Ascending aorta (tissue), 2 donors: ENCODE measurements at regions of chr20 and their contacts with region 1.

Region 1: DNA sequence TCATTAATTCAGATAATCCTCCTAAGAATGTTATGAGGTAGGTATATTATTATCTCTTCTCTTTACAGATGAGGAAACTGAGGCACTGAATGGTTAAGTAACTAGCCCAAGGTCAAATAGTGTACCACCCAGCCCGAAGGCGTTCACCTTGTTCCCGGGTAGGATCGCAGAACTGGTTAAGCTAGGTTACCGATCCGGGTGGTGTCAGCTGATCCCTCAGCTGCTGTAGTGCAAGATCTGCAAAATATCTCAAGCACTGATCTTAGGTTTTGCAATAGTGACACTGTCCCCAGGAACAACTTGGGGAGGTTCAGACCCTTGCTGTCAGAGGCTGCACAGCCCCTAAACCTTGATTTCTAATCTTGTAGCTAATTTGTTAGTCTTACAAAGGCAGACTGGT is 28.2 kb downstream of the SLC52A3 start:
- DNase-seq: no peak
- H3K4me3 ChIP-seq: no peak overlapping the region
- H3K27ac ChIP-seq: no peak overlapping the region
- H3K4me1 ChIP-seq: no peaks in the 10 kb centered on the region
- H3K27me3 ChIP-seq: no peaks in the 10 kb centered on the region
- CTCF ChIP-seq: no peak

Region 2: GRCh38 chr20:561437-562231 is 178.5 kb before region 1 on chr20:
- intact Hi-C with region 1: loop called (anchors 1 kb)
- DNase-seq: peak in 1 of 2 donors; percentile 68
- H3K4me3 ChIP-seq: no peak overlapping the region
- H3K27ac ChIP-seq: no peak overlapping the region
- H3K4me1 ChIP-seq: no peaks in the 10 kb centered on the region
- H3K27me3 ChIP-seq: no peaks in the 10 kb centered on the region
- CTCF ChIP-seq: peak; percentile 81 to 93 (median 82)

Region 3: GRCh38 chr20:775679-776135 is 35.6 kb after region 1 on chr20:
- intact Hi-C with region 1: no loop called
- DNase-seq: no peak
- H3K4me3 ChIP-seq: no peak overlapping the region
- H3K27ac ChIP-seq: no peak overlapping the region
- H3K4me1 ChIP-seq: no peaks in the 10 kb centered on the region
- H3K27me3 ChIP-seq: no peaks in the 10 kb centered on the region
- CTCF ChIP-seq: no peak